Activated CD4-positive, alpha-beta T cell treated with anti-CD3 and anti-CD28 coated beads, Interleukin-2, amount 10 ng/mL, durations not matched to agents 24 days and 14 days (primary cell): ENCODE measurements at regions of chr3 and their contacts with region 1.

Region 1: DNA sequence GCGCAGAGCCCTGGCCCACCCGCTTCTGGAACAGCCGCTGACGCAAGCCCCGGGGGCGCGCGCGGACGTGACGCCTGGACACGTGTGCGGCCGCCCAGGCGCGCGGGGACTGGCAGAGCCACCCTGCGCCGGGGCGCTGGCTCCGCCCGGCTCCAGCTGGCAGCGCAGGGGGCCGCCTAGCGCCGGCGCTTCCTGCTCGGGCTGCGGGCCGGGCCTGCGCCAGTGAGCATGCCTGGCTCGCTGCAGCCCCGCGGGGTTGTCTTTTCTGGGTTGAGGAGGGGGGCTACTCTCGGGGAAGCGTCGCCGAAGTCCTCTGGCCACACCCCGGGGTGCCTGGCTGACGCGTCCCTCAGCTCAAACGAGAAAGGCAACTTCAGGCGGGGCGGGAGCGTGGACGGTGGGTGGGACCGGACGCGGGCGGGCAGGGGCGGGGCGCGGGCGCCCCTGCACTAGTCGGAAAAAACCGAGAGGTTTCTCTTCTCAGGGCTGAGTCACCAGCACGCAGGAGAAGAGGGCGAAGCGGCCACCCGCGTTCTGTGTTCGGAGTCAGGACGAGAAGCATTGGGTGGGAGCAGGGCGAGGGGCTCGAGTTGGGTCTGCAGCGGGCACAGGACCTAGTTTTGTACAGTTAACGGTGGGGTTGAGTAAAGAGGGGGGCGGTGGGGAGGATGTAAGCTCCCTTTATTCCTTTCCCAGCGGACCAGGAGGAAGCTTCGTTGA is at the start of gene SIAH2:
- DNase-seq: peak; percentile 97
- H3K4me3 Mint-ChIP-seq: peak within 1 kb of the TSS; percentile 99
- H3K27ac Mint-ChIP-seq: peak within 1 kb of the TSS; percentile 100
- H3K4me1 Mint-ChIP-seq: peaks cover 51% of the 10 kb centered on the region
- H3K27me3 Mint-ChIP-seq: no peaks in the 10 kb centered on the region
- total RNA-seq, gene SIAH2: 130 and 133 TPM in 2 replicates

Region 2: GRCh38 chr3:150384296-150385212 is 378.7 kb before region 1 on chr3:
- intact Hi-C with region 1: loop called (anchors 1 kb)
- DNase-seq: peak; percentile 84
- H3K4me3 Mint-ChIP-seq: peak overlapping the region; percentile 68
- H3K27ac Mint-ChIP-seq: peak overlapping the region; percentile 77
- H3K4me1 Mint-ChIP-seq: peaks cover 25% of the 10 kb centered on the region
- H3K27me3 Mint-ChIP-seq: no peaks in the 10 kb centered on the region

Region 3: DNA sequence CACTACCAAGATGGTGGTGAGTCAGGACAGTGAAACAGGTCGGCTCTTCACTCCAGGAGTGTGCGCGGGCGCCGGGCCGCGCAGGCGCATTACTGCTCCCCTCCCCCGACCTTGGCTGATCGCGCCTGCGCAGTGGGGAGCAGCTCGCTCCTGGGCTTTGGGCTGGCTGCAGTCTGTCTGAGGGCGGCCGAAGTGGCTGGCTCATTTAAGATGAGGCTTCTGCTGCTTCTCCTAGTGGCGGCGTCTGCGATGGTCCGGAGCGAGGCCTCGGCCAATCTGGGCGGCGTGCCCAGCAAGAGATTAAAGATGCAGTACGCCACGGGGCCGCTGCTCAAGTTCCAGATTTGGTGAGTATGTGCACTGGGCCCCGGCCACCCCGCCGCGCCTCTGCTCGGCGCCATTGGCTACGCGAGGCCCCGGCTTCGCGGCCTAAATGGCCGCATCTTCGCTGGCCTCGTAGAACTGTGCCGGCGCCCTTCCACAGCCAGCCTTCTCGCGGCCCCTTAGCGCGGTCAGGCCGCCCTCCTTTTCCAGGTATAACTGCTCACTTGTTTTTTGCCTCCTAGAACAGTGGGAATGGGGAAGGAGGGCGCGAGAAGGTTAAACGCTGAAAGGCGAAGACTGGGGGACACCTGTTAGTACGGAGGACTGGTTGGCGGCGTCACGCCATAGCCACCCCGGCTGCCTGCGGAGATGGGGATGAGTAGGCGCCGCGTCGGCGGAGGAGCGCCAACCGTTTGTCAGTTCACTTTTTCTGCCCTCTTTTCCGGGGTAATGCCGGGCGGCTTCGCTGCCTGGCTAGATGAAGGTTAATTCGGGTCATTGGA is 159.9 kb before region 1 on chr3 and contains the start of gene SELENOT:
- intact Hi-C with region 1: loop called (anchors 2 kb)
- DNase-seq: peak; percentile 99
- H3K4me3 Mint-ChIP-seq: peak within 1 kb of the TSS; percentile 98
- H3K27ac Mint-ChIP-seq: peak within 1 kb of the TSS; percentile 99
- H3K4me1 Mint-ChIP-seq: peaks cover 50% of the 10 kb centered on the region
- H3K27me3 Mint-ChIP-seq: no peaks in the 10 kb centered on the region
- total RNA-seq, gene SELENOT: 127 and 135 TPM in 2 replicates

Region 4: GRCh38 chr3:150721285-150722130 is 41.8 kb before region 1 on chr3:
- intact Hi-C with region 1: loop called (anchors 1 kb)
- DNase-seq: peak; percentile 79
- H3K4me3 Mint-ChIP-seq: no peak overlapping the region
- H3K27ac Mint-ChIP-seq: no peak overlapping the region
- H3K4me1 Mint-ChIP-seq: peaks cover 20% of the 10 kb centered on the region
- H3K27me3 Mint-ChIP-seq: no peaks in the 10 kb centered on the region

Region 5: DNA sequence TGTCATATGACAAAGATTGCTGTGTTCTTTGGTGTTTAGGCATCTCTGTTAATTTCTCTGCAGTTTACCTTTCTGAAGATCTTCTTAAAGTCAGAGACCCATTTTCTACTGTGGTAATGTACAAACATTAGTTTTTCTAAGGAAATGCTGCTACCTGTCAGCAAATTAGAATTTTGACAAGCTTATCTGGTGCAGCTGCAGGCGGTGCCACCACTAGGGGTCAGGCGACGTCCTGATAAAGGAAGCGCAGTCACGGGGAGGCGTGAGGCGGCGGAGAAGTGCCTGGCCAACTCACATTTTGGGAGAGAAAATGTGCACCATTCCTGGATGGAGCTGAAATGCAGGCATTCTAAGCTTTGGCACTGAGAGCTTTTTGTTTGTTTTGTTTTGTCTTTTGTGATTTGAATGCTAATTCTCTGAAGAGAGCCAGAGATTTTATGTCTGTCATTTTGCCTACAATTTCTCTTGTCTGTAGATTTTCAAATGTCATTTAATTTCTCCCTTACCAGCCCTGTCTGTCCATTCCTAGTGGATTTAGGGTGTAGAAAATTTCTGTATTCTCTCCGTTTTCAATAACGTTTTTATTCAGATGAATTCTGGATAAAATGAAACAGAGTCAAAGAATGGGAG is 24.6 kb after region 1 on chr3:
- intact Hi-C with region 1: loop called (anchors 1 kb)
- DNase-seq: peak; percentile 92
- H3K4me3 Mint-ChIP-seq: peak overlapping the region; percentile 2
- H3K27ac Mint-ChIP-seq: peak overlapping the region; percentile 39
- H3K4me1 Mint-ChIP-seq: peaks cover 39% of the 10 kb centered on the region
- H3K27me3 Mint-ChIP-seq: peaks cover 4% of the 10 kb centered on the region

Region 6: DNA sequence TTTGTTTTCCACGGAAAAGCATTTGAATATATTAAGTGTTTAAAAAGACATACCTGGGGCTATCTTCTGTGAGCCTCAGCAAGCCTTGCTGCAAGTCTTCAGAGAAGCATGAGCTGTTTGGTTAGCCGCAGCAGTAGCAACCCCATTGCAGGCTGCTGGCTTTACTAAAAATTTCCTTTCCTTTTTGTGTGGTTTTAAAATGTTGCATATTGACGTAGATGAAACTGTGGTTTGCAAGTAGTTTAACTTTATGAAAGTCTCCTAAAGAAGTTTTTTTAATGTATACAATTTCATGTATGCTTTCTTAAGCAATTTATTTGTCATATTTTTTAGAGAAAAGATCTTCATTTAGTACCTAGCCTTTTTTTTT is 439.8 kb after region 1 on chr3 and contains the start of gene GPR171:
- intact Hi-C with region 1: loop called (anchors 2 kb)
- DNase-seq: peak; percentile 93
- H3K4me3 Mint-ChIP-seq: peak within 1 kb of the TSS; percentile 89
- H3K27ac Mint-ChIP-seq: peak within 1 kb of the TSS; percentile 99
- H3K4me1 Mint-ChIP-seq: peaks cover 52% of the 10 kb centered on the region
- H3K27me3 Mint-ChIP-seq: no peaks in the 10 kb centered on the region
- total RNA-seq, gene GPR171: 159 and 164 TPM in 2 replicates

Region 7: DNA sequence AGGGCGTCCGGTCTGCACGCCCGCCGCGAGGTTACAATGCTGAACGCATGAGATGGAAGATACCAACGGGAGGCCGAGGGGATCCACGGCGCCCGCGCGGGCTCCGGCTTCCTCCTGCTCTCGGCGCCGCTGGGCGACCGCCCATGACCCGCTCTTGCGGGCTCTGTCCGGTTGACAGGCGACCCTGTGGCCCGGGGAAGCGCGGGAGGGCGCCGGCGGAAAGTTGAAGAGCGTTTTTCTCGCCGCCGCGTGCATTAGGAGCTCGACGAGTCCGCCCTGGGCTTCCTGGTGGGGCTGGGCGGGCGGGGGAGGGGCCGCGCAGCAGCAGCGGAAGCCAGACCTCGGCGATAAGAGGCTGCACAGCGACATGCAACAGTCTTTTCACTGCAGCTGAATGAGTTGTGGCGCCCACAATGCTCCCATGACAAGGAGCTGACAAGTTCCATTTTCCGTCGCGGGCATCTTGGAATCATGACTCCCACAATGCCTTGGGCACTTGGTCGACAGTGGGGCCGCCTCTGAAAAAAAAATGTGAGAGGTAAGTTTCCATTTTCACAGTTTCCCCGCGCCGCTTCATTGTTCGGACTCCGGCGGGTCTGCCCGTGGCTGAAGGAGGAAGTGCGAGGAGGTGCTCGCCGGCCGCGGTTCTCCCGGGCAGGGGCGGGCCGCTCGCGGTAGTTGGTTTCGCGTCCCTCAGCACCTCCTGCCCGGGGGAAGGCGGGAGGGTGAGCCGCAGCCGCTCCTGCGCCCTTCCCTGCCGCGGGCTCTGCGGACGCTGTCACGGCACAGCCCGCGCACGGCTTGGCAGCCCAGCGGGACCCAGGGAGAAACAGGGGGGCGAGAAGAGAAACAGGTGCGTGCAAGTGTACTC is 1505.5 kb after region 1 on chr3 and contains the start of gene MBNL1:
- intact Hi-C with region 1: loop called (anchors 5 kb)
- DNase-seq: peak; percentile 95
- H3K4me3 Mint-ChIP-seq: peak within 1 kb of the TSS; percentile 83
- H3K27ac Mint-ChIP-seq: peak within 1 kb of the TSS; percentile 94
- H3K4me1 Mint-ChIP-seq: peaks cover 47% of the 10 kb centered on the region
- H3K27me3 Mint-ChIP-seq: no peaks in the 10 kb centered on the region
- total RNA-seq, gene MBNL1: 296 and 298 TPM in 2 replicates